GM23248 (cell line): ENCODE measurements at regions of chr9 and their contacts with region 1.

Region 1: DNA sequence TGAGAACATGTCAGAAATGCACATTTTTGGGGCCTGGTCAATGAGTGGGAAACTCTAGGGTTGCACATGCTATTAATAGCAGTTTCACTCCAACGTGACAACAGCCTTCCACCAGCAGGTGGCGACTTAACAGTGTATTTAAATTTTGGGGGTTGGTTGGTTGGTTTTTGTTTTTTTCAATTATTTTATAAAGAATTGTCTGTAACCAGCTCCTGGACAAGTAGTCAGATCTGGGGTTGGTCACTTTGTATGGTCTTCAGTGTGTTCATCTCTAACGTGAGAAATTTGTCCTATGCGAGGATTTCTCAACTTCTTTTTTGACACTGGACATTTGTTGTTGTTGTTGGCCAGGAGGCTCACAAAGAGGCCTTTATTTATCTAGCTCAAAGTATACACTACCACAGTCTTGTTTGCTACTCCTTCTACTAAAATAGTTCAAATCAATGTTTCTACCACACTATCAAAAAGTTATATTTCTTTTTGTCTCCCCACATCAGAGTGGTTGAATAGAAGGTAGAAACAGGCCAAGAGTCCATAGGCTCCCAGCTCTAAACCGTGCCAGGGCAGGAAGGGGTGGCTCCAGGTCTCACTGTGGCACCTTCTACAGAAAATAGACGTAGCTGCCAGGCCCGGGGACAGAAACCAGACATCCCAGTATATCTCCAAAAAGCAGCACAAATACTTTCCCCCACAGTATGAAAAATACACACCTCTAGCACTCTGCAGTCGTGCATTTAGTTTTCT is 110.4 kb downstream of the TRPM6 start:
- DNase-seq: peak; percentile 83
- H3K4me3 ChIP-seq: no peak overlapping the region
- H3K27ac ChIP-seq: no peak overlapping the region
- H3K4me1 ChIP-seq: no peaks in the 10 kb centered on the region
- H3K27me3 ChIP-seq: no peaks in the 10 kb centered on the region

Region 2: GRCh38 chr9:74838351-74838750 is 61.0 kb after region 1 on chr9:
- in situ Hi-C with region 1: no loop called
- DNase-seq: peak; percentile 10
- H3K4me3 ChIP-seq: no peak overlapping the region
- H3K27ac ChIP-seq: no peak overlapping the region
- H3K4me1 ChIP-seq: no peaks in the 10 kb centered on the region
- H3K27me3 ChIP-seq: no peaks in the 10 kb centered on the region

Region 3: DNA sequence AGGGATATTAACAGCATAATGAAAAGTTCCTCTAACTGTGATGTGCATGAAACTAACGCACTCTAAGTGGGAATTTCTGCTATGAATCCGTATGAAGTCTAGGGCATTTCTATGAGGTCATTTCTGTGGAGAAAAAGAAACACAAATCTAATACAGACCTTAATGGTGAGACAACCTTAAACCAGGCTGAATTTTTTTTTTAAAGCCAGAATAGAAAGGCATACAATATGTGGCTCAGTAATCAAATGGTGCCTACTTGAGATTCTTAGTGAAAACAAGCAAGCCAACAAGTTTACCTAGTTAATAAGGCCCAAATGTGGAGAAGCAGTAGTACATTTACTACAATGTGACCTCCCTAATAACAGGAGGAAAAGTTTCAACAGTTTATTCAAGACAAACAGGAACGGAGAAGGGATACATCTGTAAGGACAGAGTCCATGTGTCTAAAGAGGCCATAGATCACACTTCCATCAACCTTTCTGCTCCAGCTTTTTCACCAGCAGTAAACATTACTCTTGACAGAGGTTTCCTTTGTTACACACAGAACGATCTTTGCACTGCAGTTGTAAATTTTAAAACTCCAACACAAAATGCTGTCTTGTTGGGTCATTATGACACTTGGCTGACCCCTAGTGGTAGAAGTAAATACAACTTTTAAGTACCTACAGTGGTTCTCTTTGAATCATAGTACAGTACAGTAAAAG is 224.6 kb after region 1 on chr9:
- in situ Hi-C with region 1: loop called (anchors 5 kb)
- DNase-seq: peak; percentile 78
- H3K4me3 ChIP-seq: no peak overlapping the region
- H3K27ac ChIP-seq: no peak overlapping the region
- H3K4me1 ChIP-seq: no peaks in the 10 kb centered on the region
- H3K27me3 ChIP-seq: no peaks in the 10 kb centered on the region

Region 4: DNA sequence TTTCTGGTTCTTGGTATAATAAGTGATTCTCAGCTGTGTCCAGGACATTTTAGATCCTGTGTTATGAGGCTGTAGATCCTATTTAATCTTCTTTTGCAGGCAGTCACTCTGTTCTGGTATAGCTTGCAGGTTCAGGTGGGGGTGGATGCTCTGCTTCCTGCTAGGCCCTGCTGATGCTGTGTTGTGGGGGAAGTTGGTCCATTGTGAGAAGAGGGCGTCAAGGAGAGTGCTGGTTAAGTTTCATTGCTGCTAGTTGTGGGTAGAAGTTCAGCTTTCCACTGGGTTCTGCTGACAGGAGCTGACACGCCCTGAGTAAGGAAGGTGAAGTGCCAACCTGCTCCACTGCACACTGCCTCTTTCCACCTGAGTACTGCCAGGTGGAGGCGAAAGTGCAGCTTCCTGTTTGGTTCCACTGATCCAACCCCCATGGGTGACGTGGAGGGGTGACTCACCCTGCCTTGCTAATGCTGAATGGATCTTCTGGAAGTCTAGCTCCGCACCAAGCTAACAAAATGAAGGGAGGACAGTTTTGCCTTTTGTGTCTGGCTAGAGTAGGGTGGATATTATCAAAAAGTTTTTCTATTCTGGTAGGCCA is 294.3 kb after region 1 on chr9:
- in situ Hi-C with region 1: loop called (anchors 5 kb)
- DNase-seq: no peak
- H3K4me3 ChIP-seq: no peak overlapping the region
- H3K27ac ChIP-seq: no peak overlapping the region
- H3K4me1 ChIP-seq: no peaks in the 10 kb centered on the region
- H3K27me3 ChIP-seq: no peaks in the 10 kb centered on the region